ENCODE measurements at regions of chr10 and their contacts with region 1.

Region 1: GRCh38 chr10:100174699-100175677 is 10.8 kb downstream of the ERLIN1 start:
- DNase-seq: no peak
- H3K4me3 ChIP-seq: no peak overlapping the region
- H3K27ac ChIP-seq: no peak overlapping the region
- H3K4me1 ChIP-seq: peaks cover 4 to 19% (median 10%) of the 10 kb centered on the region in 4 experiments
- H3K27me3 ChIP-seq: no peaks in the 10 kb centered on the region

Region 2: GRCh38 chr10:100128951-100129350 is 46.0 kb before region 1 on chr10:
- CTCF ChIA-PET with region 1: no interaction called
- POLR2A ChIA-PET with region 1: no interaction called
- DNase-seq: peak in 2 of 3 donors; percentile 20 to 41
- H3K4me3 ChIP-seq: no peak overlapping the region
- H3K27ac ChIP-seq: no peak overlapping the region
- H3K4me1 ChIP-seq: peaks cover 0 to 5% (median 0%) of the 10 kb centered on the region in 4 experiments
- H3K27me3 ChIP-seq: no peaks in the 10 kb centered on the region

Region 3: DNA sequence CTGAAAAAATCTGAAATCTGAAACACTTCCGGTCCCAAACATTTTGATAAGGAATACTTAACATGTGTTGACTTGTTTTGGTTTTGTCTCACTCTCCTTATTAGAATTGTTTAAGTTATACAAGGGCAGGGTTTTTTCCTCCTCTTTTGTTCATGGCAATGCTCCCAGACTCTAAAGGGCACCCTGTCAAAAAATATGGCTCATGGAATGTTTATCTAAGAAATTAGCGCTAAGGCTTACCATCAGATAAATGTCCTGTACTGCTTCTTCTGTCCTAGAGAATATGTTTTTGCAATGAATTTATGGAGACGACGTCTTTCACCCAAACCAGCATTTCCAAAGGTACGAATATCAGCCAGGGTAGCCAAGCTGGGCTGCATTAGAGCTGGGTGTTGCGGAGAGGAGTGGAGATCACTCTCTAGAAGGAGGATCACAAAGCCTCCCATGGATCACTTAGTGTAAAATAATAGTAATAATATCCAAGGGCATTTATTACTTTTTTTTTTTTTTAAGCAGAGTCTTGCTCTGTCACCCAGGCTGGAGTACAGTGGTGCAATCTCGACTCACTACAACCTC is 36.0 kb before region 1 on chr10:
- CTCF ChIA-PET with region 1: no interaction called
- POLR2A ChIA-PET with region 1: no interaction called
- DNase-seq: no peak
- H3K4me3 ChIP-seq: no peak overlapping the region
- H3K27ac ChIP-seq: no peak overlapping the region
- H3K4me1 ChIP-seq: no peaks in the 10 kb centered on the region
- H3K27me3 ChIP-seq: peaks cover 0 to 4% (median 0%) of the 10 kb centered on the region in 5 experiments

Region 4: GRCh38 chr10:100185364-100186252 is 10.6 kb after region 1 on chr10 and contains the start of gene ERLIN1:
- CTCF ChIA-PET with region 1: interaction called, 13 read pairs
- POLR2A ChIA-PET with region 1: interaction called, 4 read pairs
- DNase-seq: peak; percentile 90 to 96 (median 95)
- H3K4me3 ChIP-seq: peak within 1 kb of the TSS; percentile 79 to 100 (median 92)
- H3K27ac ChIP-seq: peak within 1 kb of the TSS; percentile 95 to 96
- H3K4me1 ChIP-seq: peaks cover 35 to 56% (median 44%) of the 10 kb centered on the region in 4 experiments
- H3K27me3 ChIP-seq: no peaks in the 10 kb centered on the region